A673 (cell line): ENCODE measurements at regions of chr11 and their contacts with region 1.

Region 1: DNA sequence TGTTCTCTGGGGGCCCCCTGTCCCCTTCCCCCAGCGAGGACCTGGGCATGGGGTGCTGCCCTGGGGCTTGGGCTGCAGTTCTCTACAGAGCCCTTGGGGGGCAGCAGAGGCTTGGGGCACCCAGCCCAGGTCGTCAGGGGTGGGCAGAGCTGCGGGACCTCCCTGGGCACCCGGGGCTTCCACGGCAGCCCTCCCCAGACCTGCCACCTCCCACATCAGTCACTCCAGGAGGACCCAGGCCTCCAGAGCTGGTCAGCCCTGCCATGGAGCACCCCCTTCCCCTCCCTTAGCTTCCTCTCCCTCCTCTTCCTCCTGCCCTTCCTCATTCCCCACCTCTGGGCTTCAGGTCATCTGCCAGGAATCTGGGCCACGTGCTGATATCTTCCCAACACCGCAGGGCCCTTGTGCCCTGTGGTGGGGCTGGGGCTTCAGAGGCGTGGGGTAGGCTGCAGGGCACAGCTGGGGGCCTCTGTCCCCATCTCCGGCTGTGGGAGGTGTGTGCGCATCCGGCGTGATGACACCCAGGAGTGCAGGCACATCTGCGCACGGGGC is 5.8 kb downstream of the TSPAN4 start:
- DNase-seq: peak; percentile 54
- H3K4me3 ChIP-seq: peak overlapping the region; percentile 52
- H3K27ac ChIP-seq: no peak overlapping the region
- H3K4me1 ChIP-seq: peaks cover 30% of the 10 kb centered on the region
- H3K27me3 ChIP-seq: no peaks in the 10 kb centered on the region
- CTCF ChIP-seq: peak; percentile 82

Region 2: GRCh38 chr11:662689-663274 is 185.7 kb before region 1 on chr11:
- CTCF ChIA-PET with region 1: no interaction called
- POLR2A ChIA-PET with region 1: no interaction called
- intact Hi-C with region 1: no loop called
- DNase-seq: peak; percentile 41
- H3K4me3 ChIP-seq: no peak overlapping the region
- H3K27ac ChIP-seq: no peak overlapping the region
- H3K4me1 ChIP-seq: peaks cover 18% of the 10 kb centered on the region
- H3K27me3 ChIP-seq: no peaks in the 10 kb centered on the region
- CTCF ChIP-seq: peak; percentile 69

Region 3: DNA sequence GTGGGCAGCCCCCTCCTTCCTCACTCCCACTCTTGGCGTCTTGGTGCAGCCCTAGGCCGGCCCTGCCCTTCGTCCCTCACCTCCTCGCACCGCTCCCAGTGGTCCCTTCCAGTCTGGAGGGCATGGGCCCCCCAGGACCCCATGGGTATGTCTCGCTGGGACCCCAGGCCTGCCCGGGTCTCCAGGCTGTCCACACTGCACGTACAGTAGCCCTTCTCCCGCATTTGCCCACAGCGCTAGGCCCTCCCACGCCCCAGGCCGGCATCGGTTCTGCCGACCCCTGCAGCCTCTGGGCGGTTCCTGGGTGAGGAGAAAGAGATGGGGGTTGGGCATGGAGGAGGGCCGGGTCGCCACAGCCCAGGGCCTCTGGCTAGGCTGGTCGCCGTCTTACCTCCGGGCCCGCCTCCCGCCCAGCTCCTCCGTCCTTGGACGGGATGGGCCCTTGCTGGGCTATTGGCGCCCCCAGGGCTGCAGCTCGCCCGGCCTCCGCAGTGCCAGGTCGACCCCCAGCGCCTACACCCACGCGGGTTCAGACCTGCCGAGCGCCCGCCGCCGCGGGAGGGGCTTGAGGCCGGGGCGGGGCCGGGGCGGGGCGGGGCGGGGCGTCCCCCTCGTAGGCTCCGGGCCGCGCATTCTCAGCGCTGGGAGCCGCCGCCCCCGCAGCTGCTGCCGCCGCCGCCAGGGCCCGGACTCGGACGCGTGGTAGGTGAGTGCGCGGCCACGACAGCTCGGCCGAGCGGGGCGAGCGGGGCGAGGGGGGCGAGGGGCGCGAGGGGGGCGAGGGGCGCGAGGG is 15.9 kb before region 1 on chr11 and contains the start of gene CD151:
- CTCF ChIA-PET with region 1: no interaction called
- POLR2A ChIA-PET with region 1: no interaction called
- intact Hi-C with region 1: no loop called
- DNase-seq: peak; percentile 70
- H3K4me3 ChIP-seq: peak within 1 kb of the TSS; percentile 69
- H3K27ac ChIP-seq: peak within 1 kb of the TSS; percentile 75
- H3K4me1 ChIP-seq: peaks cover 22% of the 10 kb centered on the region
- H3K27me3 ChIP-seq: no peaks in the 10 kb centered on the region
- CTCF ChIP-seq: no peak
- total RNA-seq, gene CD151: 123 and 127 TPM in 2 replicates

Region 4: DNA sequence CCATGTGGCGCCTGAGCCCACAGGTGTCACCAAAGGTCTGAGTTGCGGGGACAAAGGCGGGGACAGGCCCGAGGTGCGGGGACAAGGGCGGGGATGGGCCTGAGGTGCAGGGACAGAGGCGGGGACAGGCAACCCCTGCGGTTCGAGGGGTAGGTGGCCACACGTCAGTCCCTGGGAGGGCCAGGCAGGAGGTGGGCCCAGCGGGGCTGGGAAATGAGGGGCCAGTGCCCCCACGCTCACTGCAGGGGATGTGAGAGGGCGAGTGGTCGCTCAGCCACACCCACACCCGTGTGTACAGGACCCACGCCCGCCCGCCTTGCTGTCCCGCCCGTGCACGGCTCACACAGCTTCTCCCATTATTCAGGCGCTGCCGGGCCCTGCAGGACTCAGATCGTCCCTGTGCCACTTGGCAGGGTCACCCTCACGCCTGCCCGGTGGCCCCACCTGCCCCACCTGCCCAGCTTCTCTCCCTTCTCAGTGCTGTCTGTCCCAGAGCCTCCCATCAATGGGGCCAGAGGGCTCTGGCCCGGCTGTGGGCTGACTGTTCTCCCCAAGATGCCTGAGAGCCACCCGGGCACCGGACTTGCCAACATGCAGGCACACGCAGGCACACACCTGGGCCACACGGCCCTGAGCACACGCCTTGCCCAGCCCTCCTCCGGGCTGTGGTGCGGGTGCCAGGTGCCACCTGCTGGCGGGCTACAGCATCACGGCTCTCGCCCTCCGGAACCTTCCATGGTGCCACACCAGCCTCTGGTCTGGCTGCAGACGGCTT is 202.3 kb after region 1 on chr11:
- CTCF ChIA-PET with region 1: interaction called, 5 read pairs
- POLR2A ChIA-PET with region 1: no interaction called
- intact Hi-C with region 1: loop called (anchors 2 kb)
- DNase-seq: peak; percentile 69
- H3K4me3 ChIP-seq: no peak overlapping the region
- H3K27ac ChIP-seq: no peak overlapping the region
- H3K4me1 ChIP-seq: no peaks in the 10 kb centered on the region
- H3K27me3 ChIP-seq: no peaks in the 10 kb centered on the region
- CTCF ChIP-seq: peak; percentile 88

Region 5: DNA sequence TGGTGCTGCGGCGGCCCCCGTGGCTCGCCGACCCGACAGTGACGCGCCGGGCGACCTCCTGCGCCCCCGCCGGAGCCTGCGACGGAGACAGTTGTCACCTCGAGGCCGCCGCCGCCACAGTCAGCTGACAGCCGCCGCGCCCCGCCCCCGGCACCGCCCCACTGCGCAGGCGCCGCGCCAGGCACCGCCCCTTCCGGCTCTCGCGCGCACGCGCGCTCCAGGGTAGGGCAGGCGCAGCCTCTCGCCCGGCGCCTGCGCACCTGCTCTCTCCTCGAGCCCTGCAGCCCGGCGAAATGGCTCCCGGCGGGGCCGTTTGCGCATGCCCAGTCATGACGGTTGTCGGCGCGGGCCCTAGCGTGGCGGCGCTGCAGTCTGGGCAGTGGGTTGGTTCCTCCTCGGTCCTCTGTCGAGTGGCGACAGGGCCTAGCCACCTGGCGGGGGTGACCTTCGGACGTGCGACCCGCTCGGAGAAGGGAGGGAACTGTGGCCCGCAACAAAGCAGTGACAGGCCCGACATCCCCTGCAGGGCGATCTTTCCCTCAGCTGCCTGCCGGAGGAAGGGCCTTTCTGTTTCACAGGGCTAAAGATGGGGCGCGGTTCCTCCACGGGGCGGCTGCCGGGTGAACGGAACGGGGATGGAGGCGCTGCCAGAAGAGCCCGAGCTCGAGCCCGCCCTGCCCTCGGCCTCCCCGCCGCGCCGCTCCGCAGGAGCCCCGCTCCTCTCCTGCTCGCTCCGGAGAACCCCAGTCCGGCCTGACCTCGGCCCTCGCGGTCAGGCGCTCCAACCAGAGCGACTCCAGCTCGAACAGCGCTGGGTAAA is 461.3 kb after region 1 on chr11 and contains the start of gene TOLLIP:
- CTCF ChIA-PET with region 1: no interaction called
- POLR2A ChIA-PET with region 1: no interaction called
- intact Hi-C with region 1: no loop called
- DNase-seq: peak; percentile 93
- H3K4me3 ChIP-seq: peak within 1 kb of the TSS; percentile 67
- H3K27ac ChIP-seq: peak within 1 kb of the TSS; percentile 82
- H3K4me1 ChIP-seq: peaks cover 9% of the 10 kb centered on the region
- H3K27me3 ChIP-seq: no peaks in the 10 kb centered on the region
- CTCF ChIP-seq: no peak; the same call in 1 of the 2 replicates
- total RNA-seq, gene TOLLIP: 24.0 and 32.5 TPM in 2 replicates